Natural killer cell (primary cell): ENCODE measurements at regions of chr4 and their contacts with region 1.

Region 1: DNA sequence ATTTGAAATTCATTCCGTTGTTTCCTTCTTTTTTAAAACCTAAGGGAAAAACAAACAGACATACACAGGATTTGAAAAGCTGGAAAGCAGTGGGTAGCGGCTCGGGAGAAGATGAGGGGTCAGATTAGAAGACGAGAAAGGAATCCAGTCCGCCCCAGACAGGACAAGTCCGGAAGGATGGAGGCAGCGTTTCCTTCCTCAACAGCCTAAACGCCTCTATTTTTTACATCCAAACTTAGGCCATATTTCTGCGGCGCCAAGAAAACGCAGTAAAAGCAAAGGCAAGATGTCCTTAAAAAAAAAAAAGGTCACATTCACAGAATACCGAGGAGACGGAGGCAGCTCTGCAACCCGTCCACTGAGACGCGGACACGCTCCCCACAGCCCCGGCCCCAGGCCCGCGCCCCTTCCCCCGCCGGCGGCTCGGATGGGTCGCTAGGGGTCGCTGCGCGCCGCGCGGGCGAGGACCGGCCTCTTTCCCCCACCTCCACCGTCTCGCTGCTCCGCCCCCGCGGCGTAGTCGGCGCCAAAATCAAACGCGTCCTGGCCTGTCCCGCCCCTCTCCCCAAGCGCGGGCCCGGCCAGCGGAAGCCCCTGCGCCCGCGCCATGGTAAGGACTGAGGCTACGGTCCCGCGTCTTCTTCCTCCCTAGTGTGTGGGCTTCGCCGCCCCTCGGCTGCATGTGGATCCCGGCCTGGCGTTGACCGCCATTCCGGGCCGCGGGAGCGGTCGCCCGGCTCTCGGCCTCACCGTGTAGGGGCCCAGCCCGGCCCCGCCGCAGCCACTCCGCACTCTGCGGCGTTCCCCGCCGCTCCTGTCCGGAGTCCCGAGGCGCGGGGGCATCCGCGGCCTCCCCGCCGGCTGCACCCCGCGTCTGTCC is at the start of gene MND1:
- DNase-seq: peak; percentile 87 to 94
- ATAC-seq: peak; percentile 96 to 97 (median 96)
- H3K4me3 ChIP-seq: peak within 1 kb of the TSS; percentile 50
- H3K4me3 Mint-ChIP-seq: peak within 1 kb of the TSS; percentile 89
- H3K27ac ChIP-seq: no peak within 1 kb of the TSS
- H3K27ac Mint-ChIP-seq: peak within 1 kb of the TSS in 1 of 2 donors; percentile 22
- H3K4me1 ChIP-seq: peaks cover 8% of the 10 kb centered on the region
- H3K4me1 Mint-ChIP-seq: peaks cover 8 to 10% of the 10 kb centered on the region in 2 donors
- H3K27me3 ChIP-seq: no peaks in the 10 kb centered on the region
- H3K27me3 Mint-ChIP-seq: peaks cover 0 to 20% of the 10 kb centered on the region in 2 donors
- CTCF ChIP-seq: peak; percentile 99
- total RNA-seq, gene MND1: 0.33 TPM in 1 of 3 donors, not detected in the others

Region 2: GRCh38 chr4:153276971-153277370 is 67.4 kb before region 1 on chr4:
- intact Hi-C with region 1: no loop called
- DNase-seq: no peak
- ATAC-seq: no peak
- H3K4me3 ChIP-seq: no peak overlapping the region
- H3K4me3 Mint-ChIP-seq: no peak overlapping the region
- H3K27ac ChIP-seq: no peak overlapping the region
- H3K27ac Mint-ChIP-seq: no peak overlapping the region
- H3K4me1 ChIP-seq: no peaks in the 10 kb centered on the region
- H3K4me1 Mint-ChIP-seq: no peaks in the 10 kb centered on the region
- H3K27me3 ChIP-seq: no peaks in the 10 kb centered on the region
- H3K27me3 Mint-ChIP-seq: peaks cover 0 to 11% of the 10 kb centered on the region in 2 donors
- CTCF ChIP-seq: no peak

Region 3: GRCh38 chr4:153432968-153433753 is 88.8 kb after region 1 on chr4:
- intact Hi-C with region 1: loop called (anchors 2 kb)
- DNase-seq: peak; percentile 52 to 86
- ATAC-seq: peak; percentile 92 to 97 (median 94)
- H3K4me3 ChIP-seq: peak overlapping the region; percentile 2
- H3K4me3 Mint-ChIP-seq: peak overlapping the region; percentile 96
- H3K27ac ChIP-seq: peak overlapping the region; percentile 74
- H3K27ac Mint-ChIP-seq: peak overlapping the region; percentile 85 to 98
- H3K4me1 ChIP-seq: peaks cover 30% of the 10 kb centered on the region
- H3K4me1 Mint-ChIP-seq: peaks cover 13 to 14% of the 10 kb centered on the region in 2 donors
- H3K27me3 ChIP-seq: no peaks in the 10 kb centered on the region
- H3K27me3 Mint-ChIP-seq: no peaks in the 10 kb centered on the region
- CTCF ChIP-seq: peak; percentile 66

Region 4: GRCh38 chr4:153497988-153498967 is 153.9 kb after region 1 on chr4:
- intact Hi-C with region 1: no loop called
- DNase-seq: peak in 1 of 2 donors; percentile 55
- ATAC-seq: peak in 2 of 3 donors; percentile 29 to 38
- H3K4me3 ChIP-seq: no peak overlapping the region
- H3K4me3 Mint-ChIP-seq: peak overlapping the region; percentile 53
- H3K27ac ChIP-seq: peak overlapping the region; percentile 79
- H3K27ac Mint-ChIP-seq: peak overlapping the region; percentile 78 to 89
- H3K4me1 ChIP-seq: peaks cover 69% of the 10 kb centered on the region
- H3K4me1 Mint-ChIP-seq: peaks cover 86 to 88% of the 10 kb centered on the region in 2 donors
- H3K27me3 ChIP-seq: no peaks in the 10 kb centered on the region
- H3K27me3 Mint-ChIP-seq: no peaks in the 10 kb centered on the region
- CTCF ChIP-seq: no peak

Region 5: DNA sequence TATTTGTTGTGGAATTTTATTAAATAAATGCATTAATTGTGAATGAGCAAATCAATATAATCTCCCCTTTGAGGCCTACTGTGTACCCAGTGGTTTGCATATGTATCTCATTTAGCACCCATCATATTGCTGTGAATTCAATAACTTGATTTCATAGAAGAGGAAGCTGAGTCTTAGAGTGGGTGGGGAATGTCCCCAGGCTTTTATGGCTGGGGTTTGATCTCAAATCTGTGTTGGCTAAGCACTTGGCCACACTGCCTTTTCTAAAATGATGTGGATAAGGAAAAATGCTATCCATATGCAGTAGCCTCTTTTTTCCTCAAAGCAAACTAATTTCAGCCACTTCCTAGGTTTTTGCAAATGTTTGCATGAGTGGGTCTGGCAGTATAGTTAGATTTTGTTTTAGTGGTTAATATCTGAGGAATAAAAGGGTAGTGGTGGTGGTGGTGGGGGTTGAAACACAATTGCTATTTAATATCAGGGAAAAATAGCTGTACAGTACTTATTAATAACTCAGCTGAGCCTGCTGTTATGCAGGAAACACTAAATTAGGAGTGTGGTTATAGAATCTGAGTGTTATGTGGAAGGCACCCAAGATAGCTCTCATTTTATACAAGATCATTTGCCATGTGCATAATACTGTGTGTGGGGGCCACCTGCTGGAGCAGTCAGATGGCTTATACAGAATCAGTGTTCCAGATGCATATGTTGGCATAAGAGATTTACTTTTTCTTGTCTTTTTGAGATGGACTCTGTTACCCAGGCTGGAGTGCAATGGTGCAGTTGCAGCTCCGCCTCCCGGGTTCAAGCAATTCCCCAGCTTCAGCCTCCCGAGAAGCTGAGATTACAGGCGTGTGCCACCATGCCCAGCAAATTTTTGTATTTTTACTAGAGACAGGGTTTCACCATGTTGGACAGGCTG is 229.8 kb after region 1 on chr4:
- intact Hi-C with region 1: loop called (anchors 1 kb)
- DNase-seq: peak; percentile 42 to 82
- ATAC-seq: peak; percentile 86 to 96 (median 95)
- H3K4me3 ChIP-seq: no peak overlapping the region
- H3K4me3 Mint-ChIP-seq: no peak overlapping the region
- H3K27ac ChIP-seq: peak overlapping the region; percentile 44
- H3K27ac Mint-ChIP-seq: peak overlapping the region; percentile 25 to 71
- H3K4me1 ChIP-seq: peaks cover 15% of the 10 kb centered on the region
- H3K4me1 Mint-ChIP-seq: peaks cover 38 to 52% of the 10 kb centered on the region in 2 donors
- H3K27me3 ChIP-seq: no peaks in the 10 kb centered on the region
- H3K27me3 Mint-ChIP-seq: no peaks in the 10 kb centered on the region
- CTCF ChIP-seq: peak; percentile 67

Region 6: DNA sequence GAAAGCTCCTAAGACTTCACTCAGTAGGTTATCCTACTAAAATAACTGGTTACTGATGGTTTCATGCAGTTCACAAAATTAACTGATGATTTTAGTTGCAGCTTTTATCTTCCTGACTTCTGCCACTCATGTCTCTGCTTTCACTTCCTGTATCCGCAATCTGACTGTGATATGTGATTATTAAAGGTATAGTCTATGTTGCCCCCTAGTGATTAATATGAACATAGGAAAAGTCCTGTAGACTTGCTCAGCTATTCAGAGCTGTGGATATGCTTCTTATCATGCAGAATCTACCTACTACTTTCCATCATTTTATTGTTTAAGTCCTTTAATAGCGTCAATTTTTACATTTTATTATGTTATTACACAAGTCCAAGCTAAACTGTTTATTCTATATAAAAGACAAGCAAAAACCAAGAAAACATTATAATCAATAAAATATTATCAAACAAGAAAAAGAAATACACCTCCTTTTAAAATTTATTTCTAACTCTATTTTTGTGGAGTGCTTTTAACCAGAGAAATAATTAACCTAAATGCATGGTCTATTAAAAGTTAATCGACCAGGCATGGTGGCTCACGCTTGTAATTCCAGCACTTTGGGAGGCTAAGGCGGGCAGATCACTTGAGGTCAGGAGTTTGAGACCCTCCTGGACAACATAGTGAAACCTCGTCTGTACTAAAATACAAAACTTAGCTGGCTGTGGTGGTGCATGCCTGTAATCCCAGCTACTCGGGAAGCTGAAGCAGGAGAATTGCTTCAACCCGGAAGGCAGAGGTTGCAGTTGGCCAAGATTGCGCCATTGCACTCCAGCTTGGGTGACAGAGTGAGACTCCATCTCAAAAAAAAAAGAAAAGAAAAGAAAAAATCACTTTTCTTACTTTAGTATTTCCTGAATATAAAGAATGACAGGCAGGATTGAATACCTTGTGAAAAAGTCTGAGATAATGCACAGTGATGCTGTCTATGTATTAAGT is 299.3 kb after region 1 on chr4:
- intact Hi-C with region 1: loop called (anchors 1 kb)
- DNase-seq: peak in 1 of 2 donors; percentile 74
- ATAC-seq: peak; percentile 86 to 99 (median 98)
- H3K4me3 ChIP-seq: no peak overlapping the region
- H3K4me3 Mint-ChIP-seq: peak overlapping the region; percentile 55
- H3K27ac ChIP-seq: no peak overlapping the region
- H3K27ac Mint-ChIP-seq: peak overlapping the region; percentile 38 to 42
- H3K4me1 ChIP-seq: peaks cover 3% of the 10 kb centered on the region
- H3K4me1 Mint-ChIP-seq: peaks cover 6% of the 10 kb centered on the region in 2 donors
- H3K27me3 ChIP-seq: no peaks in the 10 kb centered on the region
- H3K27me3 Mint-ChIP-seq: no peaks in the 10 kb centered on the region
- CTCF ChIP-seq: peak; percentile 56

Region 7: DNA sequence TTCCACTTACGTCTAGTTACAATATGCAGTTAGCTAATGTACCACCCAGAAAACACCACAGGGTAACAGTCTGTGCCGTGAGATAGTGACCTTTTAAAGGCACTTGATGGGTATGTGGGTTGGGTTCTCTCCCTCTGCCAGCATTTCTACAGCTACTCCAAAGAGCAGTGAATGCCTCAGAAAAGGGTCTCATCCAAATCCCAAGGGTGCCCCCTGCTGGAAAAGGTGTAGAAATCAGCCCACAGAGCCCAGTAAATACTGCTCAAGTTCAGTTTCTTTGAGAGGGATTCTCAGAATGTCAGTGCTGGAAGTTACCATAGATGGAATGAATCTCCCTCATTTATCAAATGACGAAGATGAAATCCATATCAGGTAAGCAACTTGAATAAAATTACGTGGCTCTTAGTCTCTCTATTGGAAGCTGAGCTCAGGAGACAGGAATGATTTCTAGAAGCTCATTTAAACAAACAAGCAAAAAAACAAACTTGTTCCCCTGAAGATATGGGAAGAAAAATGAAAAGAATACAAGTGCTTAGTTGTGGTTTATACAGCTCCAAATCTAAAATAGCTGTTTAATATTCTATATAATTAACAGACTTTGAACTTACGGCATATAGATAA is 405.9 kb after region 1 on chr4:
- intact Hi-C with region 1: loop called (anchors 1 kb)
- DNase-seq: peak in 1 of 2 donors; percentile 78
- ATAC-seq: peak; percentile 42 to 64 (median 63)
- H3K4me3 ChIP-seq: no peak overlapping the region
- H3K4me3 Mint-ChIP-seq: no peak overlapping the region
- H3K27ac ChIP-seq: no peak overlapping the region
- H3K27ac Mint-ChIP-seq: no peak overlapping the region
- H3K4me1 ChIP-seq: no peaks in the 10 kb centered on the region
- H3K4me1 Mint-ChIP-seq: no peaks in the 10 kb centered on the region
- H3K27me3 ChIP-seq: no peaks in the 10 kb centered on the region
- H3K27me3 Mint-ChIP-seq: peaks cover 15 to 36% of the 10 kb centered on the region in 2 donors
- CTCF ChIP-seq: peak; percentile 47